Sigmoid colon (tissue), 7 donors: ENCODE measurements at regions of chr10 and their contacts with region 1.

Region 1: GRCh38 chr10:18238870-18239485 is 98.8 kb downstream of the CACNB2 start:
- DNase-seq: no peak
- H3K4me3 ChIP-seq: no peak overlapping the region
- H3K27ac ChIP-seq: peak overlapping the region in 3 of 4 donors; percentile 50 to 83 (median 56)
- H3K4me1 ChIP-seq: peaks cover 0 to 37% (median 22%) of the 10 kb centered on the region in 4 donors
- H3K27me3 ChIP-seq: no peaks in the 10 kb centered on the region
- CTCF ChIP-seq: peak; percentile 23 to 71 (median 52)
- EP300 ChIP-seq: no peak
- POLR2A ChIP-seq: no peak

Region 2: GRCh38 chr10:17742918-17743317 is 496.1 kb before region 1 on chr10:
- intact Hi-C with region 1: loop called (anchors 2 kb)
- DNase-seq: no peak
- H3K4me3 ChIP-seq: no peak overlapping the region
- H3K27ac ChIP-seq: no peak overlapping the region
- H3K4me1 ChIP-seq: no peaks in the 10 kb centered on the region
- H3K27me3 ChIP-seq: no peaks in the 10 kb centered on the region
- CTCF ChIP-seq: peak; percentile 62 to 93 (median 82)
- EP300 ChIP-seq: no peak
- POLR2A ChIP-seq: no peak